ENCODE measurements at regions of chr2 and their contacts with region 1.

Region 1: DNA sequence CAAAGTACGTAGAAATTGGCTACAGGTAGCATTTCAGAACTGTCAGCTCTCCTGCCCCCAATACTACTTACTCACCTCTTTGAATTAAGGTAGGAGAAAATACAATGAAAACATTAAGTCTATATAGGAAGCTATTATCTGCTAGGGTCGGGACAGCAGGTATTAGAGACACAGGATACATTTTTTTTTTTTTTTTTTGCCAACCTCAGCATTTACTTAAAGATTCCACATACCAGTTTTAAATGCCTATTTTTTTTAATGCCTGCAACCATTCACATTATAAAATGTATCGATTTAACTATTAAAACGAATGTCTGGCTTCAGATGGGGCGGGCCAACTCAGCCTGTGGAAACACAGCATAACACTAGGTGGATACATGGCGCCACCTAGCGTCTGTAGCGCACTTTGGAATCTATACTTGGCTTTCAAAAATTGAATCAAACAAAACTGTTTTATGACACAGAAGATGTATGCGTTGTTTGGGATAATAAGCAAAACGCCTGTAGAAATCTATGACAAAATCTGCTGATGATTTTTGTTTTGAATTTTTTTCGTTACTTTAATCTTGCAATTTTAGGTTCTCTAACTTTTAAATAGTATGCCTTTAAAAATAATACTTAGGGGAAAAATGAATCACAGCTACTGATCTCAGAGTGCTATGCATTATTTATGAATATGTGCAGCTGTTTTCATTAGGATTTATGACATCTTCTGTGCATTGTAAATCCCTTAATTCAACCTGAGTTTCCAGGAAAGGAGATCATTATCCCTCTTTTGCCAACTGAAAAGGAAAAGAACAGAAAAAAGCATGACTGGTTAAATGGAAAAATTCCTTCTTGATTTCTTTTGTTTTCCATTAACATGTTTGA is 261.0 kb downstream of the NYAP2 start:
- DNase-seq: peak; percentile 90
- H3K4me3 Mint-ChIP-seq: no peak overlapping the region
- H3K27ac Mint-ChIP-seq: no peak overlapping the region
- H3K4me1 Mint-ChIP-seq: no peaks in the 10 kb centered on the region
- H3K27me3 Mint-ChIP-seq: peaks cover 15% of the 10 kb centered on the region

Region 2: DNA sequence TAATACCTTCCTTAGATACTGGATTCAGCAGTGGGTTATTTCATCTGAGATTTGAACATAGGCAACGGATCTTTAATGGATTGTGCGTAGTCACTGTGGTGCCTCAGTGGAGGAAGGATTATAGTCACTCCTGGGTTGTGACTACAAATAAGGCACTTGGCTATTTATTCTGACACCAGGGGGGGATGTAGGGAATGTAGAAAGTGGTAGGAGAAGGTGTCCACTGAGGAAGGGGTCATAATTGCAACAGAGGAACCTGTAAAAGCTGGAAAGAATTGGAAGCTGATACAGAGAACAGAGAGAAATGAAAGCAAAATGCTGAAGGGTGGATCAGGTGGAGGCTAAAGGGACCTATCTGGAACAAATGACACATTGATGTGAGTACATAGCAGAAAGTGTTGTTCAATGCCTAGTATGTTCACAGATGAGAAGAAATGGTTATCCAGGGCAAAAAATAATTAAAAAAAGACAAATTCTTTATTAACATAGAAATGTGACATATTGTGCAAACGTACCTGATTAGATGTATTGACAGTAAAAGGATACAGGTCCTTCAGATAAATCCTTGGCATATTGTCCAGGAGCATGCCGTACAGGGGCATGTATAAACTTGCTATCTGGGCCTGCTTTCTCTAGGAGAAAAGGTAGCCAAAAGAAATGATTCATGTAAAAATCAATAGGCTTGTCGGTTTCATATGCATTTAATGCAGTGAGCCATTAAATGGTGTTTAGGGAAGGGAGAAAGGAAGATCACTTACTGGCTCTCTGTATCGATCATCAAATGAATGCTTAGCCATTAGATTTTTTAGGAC is 853.1 kb before region 1 on chr2:
- CTCF ChIA-PET with region 1: no interaction called
- intact Hi-C with region 1: loop called (anchors 5 kb)
- DNase-seq: no peak
- H3K4me3 Mint-ChIP-seq: no peak overlapping the region
- H3K27ac Mint-ChIP-seq: peak overlapping the region; percentile 80
- H3K4me1 Mint-ChIP-seq: no peaks in the 10 kb centered on the region
- H3K27me3 Mint-ChIP-seq: no peaks in the 10 kb centered on the region

Region 3: DNA sequence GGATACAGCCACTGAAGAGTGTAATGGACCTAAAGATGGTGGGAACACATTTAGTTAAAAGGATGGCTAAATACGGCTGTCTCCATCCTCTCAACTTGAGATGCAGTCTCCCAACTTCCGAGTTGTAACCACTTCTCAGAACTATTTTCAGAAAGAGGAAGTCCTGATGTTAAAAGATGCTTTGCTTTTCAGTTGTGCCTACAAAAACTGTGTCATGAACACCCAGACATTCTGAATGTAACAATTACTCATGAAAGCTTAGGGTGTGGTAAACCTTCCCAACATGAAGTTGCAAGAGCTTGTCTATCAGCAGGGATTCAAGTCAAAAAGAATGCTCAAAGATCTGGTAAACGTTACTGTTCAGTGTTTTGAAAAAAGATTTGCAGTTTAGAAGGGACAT is 766.1 kb before region 1 on chr2:
- CTCF ChIA-PET with region 1: no interaction called
- intact Hi-C with region 1: loop called (anchors 10 kb)
- DNase-seq: no peak
- H3K4me3 Mint-ChIP-seq: peak overlapping the region; percentile 50
- H3K27ac Mint-ChIP-seq: peak overlapping the region; percentile 90
- H3K4me1 Mint-ChIP-seq: peaks cover 69% of the 10 kb centered on the region
- H3K27me3 Mint-ChIP-seq: no peaks in the 10 kb centered on the region

Region 4: DNA sequence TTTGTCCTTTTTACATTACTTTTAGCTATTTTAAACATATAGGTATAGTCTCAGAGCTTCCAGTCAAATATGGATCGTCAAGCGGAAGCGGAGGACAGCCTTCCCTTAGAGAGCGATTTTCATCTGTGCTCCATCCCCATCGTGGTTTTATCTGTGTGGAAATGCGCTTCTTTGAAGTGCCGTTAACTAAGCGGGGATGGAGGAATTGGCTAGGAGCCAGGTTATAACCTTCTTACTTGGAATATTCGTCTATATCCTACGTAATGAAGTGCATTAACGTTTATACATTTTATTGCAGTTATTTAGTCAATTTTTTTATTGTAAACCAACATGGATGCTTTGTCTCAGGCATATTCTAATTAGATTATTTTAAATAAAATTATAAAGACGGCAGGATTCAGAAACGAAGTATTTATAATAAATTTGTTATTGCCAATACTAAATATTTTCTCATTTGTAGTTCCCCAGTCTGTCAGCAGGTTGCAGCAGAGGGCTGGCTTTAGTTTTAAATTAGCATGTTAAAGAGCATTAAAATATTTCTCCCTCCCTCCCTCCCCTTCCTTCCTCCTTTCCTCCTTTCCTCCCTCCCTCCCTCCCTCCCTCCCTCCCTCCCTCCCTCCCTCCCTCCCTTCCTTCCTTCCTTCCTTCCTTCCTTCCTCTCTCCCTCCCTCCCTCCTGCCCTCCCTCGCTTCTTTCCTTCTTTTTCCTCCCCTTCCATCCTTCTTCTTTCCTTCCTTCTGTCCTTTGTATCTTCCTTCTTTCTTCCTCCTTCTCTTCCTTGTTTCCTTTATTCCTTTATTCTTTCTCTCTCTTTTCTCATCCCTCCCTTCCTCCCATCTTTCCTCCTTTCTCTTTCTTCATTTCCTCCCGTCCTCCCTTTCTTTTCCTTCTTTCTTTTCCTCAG is 537.7 kb before region 1 on chr2:
- CTCF ChIA-PET with region 1: interaction called, 4 read pairs
- intact Hi-C with region 1: loop called (anchors 1 kb)
- DNase-seq: peak; percentile 60
- H3K4me3 Mint-ChIP-seq: no peak overlapping the region
- H3K27ac Mint-ChIP-seq: no peak overlapping the region
- H3K4me1 Mint-ChIP-seq: no peaks in the 10 kb centered on the region
- H3K27me3 Mint-ChIP-seq: no peaks in the 10 kb centered on the region

Region 5: DNA sequence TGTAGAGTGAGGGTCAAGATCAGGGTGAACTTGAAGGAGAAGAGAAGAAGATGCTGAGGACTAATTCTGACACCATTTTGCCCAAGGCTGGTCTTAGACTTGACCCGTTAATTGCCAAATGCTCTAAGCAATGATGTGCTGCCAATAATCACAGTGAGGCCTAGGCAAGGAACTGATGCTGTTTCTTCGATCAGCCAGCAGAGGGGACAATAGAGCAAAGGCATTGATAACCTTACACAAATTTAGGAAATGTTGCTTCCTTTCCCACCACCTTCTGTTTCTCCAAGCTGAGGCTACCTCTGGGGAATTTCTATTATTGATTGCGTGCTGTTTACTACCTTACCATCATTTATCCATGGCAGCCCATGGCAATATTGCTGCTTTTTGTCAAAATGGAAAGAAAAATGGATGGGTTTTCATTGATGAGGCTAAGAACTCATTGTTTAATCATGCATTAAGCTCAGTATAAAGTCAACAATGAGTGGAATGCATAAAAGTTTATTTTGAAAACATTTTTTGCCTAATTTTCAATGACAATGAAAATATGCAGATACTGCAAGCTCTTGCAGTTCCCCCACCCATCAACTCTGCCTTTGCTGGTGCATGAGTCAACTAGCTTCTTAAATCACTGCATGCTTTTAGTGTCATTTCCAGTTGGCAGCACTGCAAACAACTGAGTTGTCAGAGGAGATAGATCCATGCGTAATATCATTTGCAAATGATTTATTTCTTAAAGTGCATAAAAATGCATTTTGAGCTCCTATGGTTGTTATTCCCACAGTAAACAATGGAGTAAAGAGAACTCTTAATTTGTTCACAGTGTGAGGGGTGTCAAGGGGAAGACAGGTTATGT is 377.4 kb before region 1 on chr2:
- CTCF ChIA-PET with region 1: interaction called, 35 read pairs
- intact Hi-C with region 1: loop called (anchors 1 kb)
- DNase-seq: peak; percentile 31
- H3K4me3 Mint-ChIP-seq: no peak overlapping the region
- H3K27ac Mint-ChIP-seq: no peak overlapping the region
- H3K4me1 Mint-ChIP-seq: peaks cover 3% of the 10 kb centered on the region
- H3K27me3 Mint-ChIP-seq: no peaks in the 10 kb centered on the region

Measured in activated naive CD4-positive, alpha-beta T cell treated with anti-CD3 and anti-CD28 coated beads for 36 hours (primary cell).